Aorta (tissue), 5 donors: ENCODE measurements at regions of chr6 and their contacts with region 1.

Region 1: GRCh38 chr6:80106418-80107235 is at the start of gene BCKDHB:
- DNase-seq: peak; percentile 98 to 99
- ATAC-seq: peak; percentile 100
- H3K4me3 ChIP-seq: peak within 1 kb of the TSS; percentile 81 to 86
- H3K27ac ChIP-seq: peak within 1 kb of the TSS; percentile 44 to 90
- H3K4me1 ChIP-seq: peaks cover 2% of the 10 kb centered on the region in 2 donors
- H3K27me3 ChIP-seq: no peaks in the 10 kb centered on the region
- total RNA-seq, gene BCKDHB: 19.7 to 19.9 TPM

Region 2: GRCh38 chr6:80004173-80005072 is 102.2 kb before region 1 on chr6 and contains the start of gene TTK:
- intact Hi-C with region 1: loop called in 1 of 2 experiments (anchors 5 kb)
- DNase-seq: peak; percentile 94 to 96
- ATAC-seq: peak; percentile 100
- H3K4me3 ChIP-seq: peak within 1 kb of the TSS; percentile 39 to 51
- H3K27ac ChIP-seq: peak within 1 kb of the TSS in 1 of 2 donors; percentile 65
- H3K4me1 ChIP-seq: no peaks in the 10 kb centered on the region
- H3K27me3 ChIP-seq: no peaks in the 10 kb centered on the region
- total RNA-seq, gene TTK: 0.45 to 0.84 TPM